Transverse colon (tissue), 4 donors: ENCODE measurements at regions of chr2 and their contacts with region 1.

Region 1: GRCh38 chr2:222561817-222562645 is 93.9 kb downstream of the FARSB start:
- DNase-seq: peak; percentile 50
- H3K4me3 ChIP-seq: no peak overlapping the region
- H3K27ac ChIP-seq: no peak overlapping the region
- H3K4me1 ChIP-seq: no peaks in the 10 kb centered on the region
- H3K27me3 ChIP-seq: no peaks in the 10 kb centered on the region
- CTCF ChIP-seq: peak; percentile 53 to 77 (median 64)
- EP300 ChIP-seq: no peak
- POLR2A ChIP-seq: no peak

Region 2: GRCh38 chr2:222024932-222025880 is 536.8 kb before region 1 on chr2:
- in situ Hi-C with region 1: loop called in 1 of 4 experiments (anchors 25 kb)
- intact Hi-C with region 1: no loop called
- DNase-seq: no peak
- H3K4me3 ChIP-seq: no peak overlapping the region
- H3K27ac ChIP-seq: no peak overlapping the region
- H3K4me1 ChIP-seq: peaks cover 0 to 3% (median 0%) of the 10 kb centered on the region in 4 donors
- H3K27me3 ChIP-seq: no peaks in the 10 kb centered on the region
- CTCF ChIP-seq: peak; percentile 44 to 55 (median 45)
- EP300 ChIP-seq: no peak
- POLR2A ChIP-seq: no peak

Region 3: DNA sequence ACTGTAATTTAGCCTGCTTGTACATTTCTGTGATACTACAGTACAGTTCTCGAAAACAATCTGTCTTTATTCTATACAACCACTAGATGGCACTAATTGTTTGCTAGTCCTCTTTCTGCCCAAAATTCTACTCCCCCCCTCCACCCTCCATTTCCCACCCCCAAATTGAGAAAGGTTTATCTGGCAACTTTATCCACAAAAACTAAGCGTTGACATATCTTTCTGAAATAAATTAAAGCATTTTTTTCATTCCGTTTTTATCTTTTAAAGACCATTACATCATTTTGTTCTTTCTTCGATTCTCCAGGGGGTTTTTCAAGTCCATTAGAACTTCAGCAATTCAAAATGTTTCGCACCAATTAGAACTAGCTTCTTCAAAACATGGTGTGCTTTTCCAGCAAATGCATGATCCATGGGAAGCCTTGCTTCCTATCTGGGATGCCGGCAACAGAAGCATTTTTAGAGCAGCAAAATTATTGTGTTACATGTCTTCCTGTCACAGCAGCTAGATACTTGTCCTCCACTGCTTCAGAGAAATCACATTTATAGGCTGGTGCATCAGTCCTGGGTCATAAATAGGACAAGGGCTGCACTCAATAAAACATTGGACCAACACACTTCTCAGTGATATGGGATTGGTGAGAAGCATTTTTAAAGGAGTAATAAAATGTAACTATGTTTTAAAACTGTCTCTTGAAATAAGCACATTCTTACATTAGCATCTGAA is 504.5 kb before region 1 on chr2:
- in situ Hi-C with region 1: loop called in 1 of 4 experiments (anchors 25 kb)
- intact Hi-C with region 1: no loop called
- DNase-seq: no peak
- H3K4me3 ChIP-seq: no peak overlapping the region
- H3K27ac ChIP-seq: no peak overlapping the region
- H3K4me1 ChIP-seq: peaks cover 0 to 6% (median 0%) of the 10 kb centered on the region in 4 donors
- H3K27me3 ChIP-seq: peaks cover 60% of the 10 kb centered on the region
- CTCF ChIP-seq: peak; percentile 46 to 56 (median 55)
- EP300 ChIP-seq: no peak
- POLR2A ChIP-seq: no peak

Region 4: DNA sequence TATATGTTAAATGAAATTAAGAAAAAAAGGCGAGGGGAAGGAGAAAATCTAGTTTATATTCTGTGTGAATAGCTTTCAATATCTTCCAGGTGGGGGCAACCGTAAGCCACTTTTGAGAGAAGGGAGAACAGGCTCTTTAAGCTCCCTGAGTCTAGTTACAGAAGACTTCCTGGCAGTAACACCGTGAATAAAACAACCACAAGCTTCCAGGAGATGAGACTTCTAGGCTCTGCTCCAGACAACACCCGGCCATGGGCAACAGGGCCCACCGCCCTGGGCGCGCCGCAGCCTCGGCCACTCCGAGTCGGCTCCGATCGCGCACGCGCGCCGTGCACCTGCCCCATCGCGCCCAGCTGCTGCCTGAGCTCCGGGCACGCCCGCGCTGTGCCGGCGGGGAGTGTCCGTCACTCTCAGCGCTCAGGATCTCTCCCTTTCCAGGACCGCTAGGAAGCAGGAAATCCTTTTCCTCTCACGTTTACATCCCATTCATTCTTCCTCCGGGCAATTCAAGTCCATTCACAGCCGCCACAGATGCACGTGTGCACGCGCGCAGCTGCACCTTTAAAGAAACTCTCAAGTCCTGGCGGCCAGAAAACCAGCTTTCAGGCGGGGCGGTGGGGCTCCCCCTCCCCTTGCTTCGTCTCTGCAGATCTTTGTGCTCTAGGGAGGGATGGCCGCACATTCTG is 243.9 kb before region 1 on chr2:
- in situ Hi-C with region 1: loop called in 3 of 4 experiments (anchors 25 kb)
- intact Hi-C with region 1: loop called (anchors 1 kb)
- DNase-seq: peak; percentile 75
- H3K4me3 ChIP-seq: peak overlapping the region; percentile 2 to 64 (median 40)
- H3K27ac ChIP-seq: peak overlapping the region; percentile 20 to 66 (median 29)
- H3K4me1 ChIP-seq: peaks cover 0 to 23% (median 18%) of the 10 kb centered on the region in 4 donors
- H3K27me3 ChIP-seq: peaks cover 84% of the 10 kb centered on the region
- CTCF ChIP-seq: peak; percentile 43 to 67 (median 50)
- EP300 ChIP-seq: no peak
- POLR2A ChIP-seq: no peak

Region 5: GRCh38 chr2:222399038-222399783 is 162.8 kb before region 1 on chr2:
- in situ Hi-C with region 1: no loop called
- intact Hi-C with region 1: no loop called
- DNase-seq: no peak
- H3K4me3 ChIP-seq: no peak overlapping the region
- H3K27ac ChIP-seq: no peak overlapping the region
- H3K4me1 ChIP-seq: no peaks in the 10 kb centered on the region
- H3K27me3 ChIP-seq: no peaks in the 10 kb centered on the region
- CTCF ChIP-seq: no peak
- EP300 ChIP-seq: no peak
- POLR2A ChIP-seq: no peak